CD4-positive, alpha-beta T cell (primary cell): ENCODE measurements at regions of chr2 and their contacts with region 1.

Region 1: DNA sequence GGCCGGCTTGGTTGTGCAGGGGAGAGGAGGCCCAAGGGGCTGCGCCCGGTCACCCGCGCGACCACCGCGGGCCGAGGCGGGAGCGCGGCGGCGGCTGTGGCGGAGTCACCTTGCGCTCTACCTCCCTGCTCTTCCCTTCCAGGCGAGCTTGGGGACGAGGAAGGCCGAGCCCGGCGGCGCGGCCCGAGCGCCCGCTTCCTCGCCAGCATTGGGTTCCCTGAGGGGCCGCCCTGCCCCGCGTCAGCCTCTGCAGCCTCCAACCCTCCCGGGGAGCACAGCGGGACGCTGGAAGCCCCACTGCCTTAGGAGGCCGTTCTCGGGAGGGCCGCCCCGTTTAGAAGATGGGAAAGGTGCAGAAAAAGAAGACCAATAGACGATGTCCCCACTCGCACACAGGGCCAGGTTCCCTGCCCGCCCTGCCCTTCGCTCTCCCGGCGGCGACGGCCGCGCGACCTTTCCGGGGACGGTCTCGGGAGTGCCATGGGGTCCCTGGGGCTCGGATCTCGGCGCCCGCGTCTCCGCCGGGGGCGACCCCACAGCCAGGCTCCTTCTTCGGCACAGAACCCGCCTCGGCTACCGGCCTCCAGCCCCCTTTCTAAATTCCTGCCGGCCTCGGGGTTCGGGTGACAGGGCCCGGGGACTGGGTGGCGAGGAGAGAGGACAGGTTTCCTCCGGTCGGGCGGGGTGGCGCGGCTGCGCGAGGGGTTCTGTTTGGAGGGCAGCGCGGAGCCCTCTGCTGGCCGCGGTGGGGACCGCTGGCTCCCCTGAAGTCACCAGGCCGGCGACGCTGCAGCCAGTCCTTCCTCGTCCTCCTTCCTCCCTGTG is 85.5 kb downstream of the HS6ST1 start:
- DNase-seq: peak; percentile 68 to 88 (median 80)
- ATAC-seq: peak; percentile 97
- H3K4me3 ChIP-seq: peak overlapping the region; percentile 57
- H3K4me3 Mint-ChIP-seq: peak overlapping the region; percentile 93
- H3K27ac ChIP-seq: no peak overlapping the region
- H3K27ac Mint-ChIP-seq: no peak overlapping the region
- H3K4me1 ChIP-seq: peaks cover 14% of the 10 kb centered on the region
- H3K4me1 Mint-ChIP-seq: no peaks in the 10 kb centered on the region
- H3K27me3 ChIP-seq: no peaks in the 10 kb centered on the region
- H3K27me3 Mint-ChIP-seq: no peaks in the 10 kb centered on the region
- CTCF ChIP-seq: peak; percentile 85

Region 2: DNA sequence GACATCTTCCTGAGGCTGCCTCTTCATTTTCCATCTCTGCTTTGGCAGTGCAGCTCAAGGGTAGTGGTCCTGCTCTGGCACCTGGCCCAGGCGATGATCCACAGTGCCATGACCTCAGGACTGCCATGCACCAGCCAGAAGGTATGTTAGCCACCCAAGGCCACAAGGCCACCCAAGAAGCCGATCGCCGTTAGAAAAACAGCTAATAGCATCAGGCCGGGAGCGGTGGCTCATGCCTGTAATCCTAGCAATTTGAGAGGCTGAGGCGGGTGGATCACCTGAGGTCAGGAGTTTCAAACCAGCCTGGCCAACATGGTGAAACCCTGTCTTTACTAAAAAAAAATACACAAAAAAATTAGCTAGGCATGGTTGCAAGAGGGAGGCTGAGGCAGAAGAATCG is 170.6 kb before region 1 on chr2:
- CTCF ChIA-PET with region 1: no interaction called
- POLR2A ChIA-PET with region 1: interaction called, 3 read pairs
- intact Hi-C with region 1: loop called in 1 of 2 experiments (anchors 2 kb)
- DNase-seq: no peak
- ATAC-seq: no peak
- H3K4me3 ChIP-seq: no peak overlapping the region
- H3K4me3 Mint-ChIP-seq: no peak overlapping the region
- H3K27ac ChIP-seq: no peak overlapping the region
- H3K27ac Mint-ChIP-seq: no peak overlapping the region
- H3K4me1 ChIP-seq: no peaks in the 10 kb centered on the region
- H3K4me1 Mint-ChIP-seq: no peaks in the 10 kb centered on the region
- H3K27me3 ChIP-seq: no peaks in the 10 kb centered on the region
- H3K27me3 Mint-ChIP-seq: no peaks in the 10 kb centered on the region
- CTCF ChIP-seq: no peak

Region 3: GRCh38 chr2:128162266-128162665 is 70.9 kb before region 1 on chr2:
- CTCF ChIA-PET with region 1: no interaction called
- POLR2A ChIA-PET with region 1: no interaction called
- intact Hi-C with region 1: no loop called
- DNase-seq: peak in 2 of 14 experiments; percentile 24 to 42
- ATAC-seq: no peak
- H3K4me3 ChIP-seq: no peak overlapping the region
- H3K4me3 Mint-ChIP-seq: no peak overlapping the region
- H3K27ac ChIP-seq: no peak overlapping the region
- H3K27ac Mint-ChIP-seq: no peak overlapping the region
- H3K4me1 ChIP-seq: no peaks in the 10 kb centered on the region
- H3K4me1 Mint-ChIP-seq: peaks cover under 1% of the 10 kb centered on the region
- H3K27me3 ChIP-seq: no peaks in the 10 kb centered on the region
- H3K27me3 Mint-ChIP-seq: no peaks in the 10 kb centered on the region
- CTCF ChIP-seq: no peak

Region 4: GRCh38 chr2:128178650-128179460 is 54.3 kb before region 1 on chr2:
- CTCF ChIA-PET with region 1: interaction called, 4 read pairs
- POLR2A ChIA-PET with region 1: no interaction called
- intact Hi-C with region 1: loop called (anchors 1 kb)
- DNase-seq: peak; percentile 7 to 75 (median 34)
- ATAC-seq: peak; percentile 86
- H3K4me3 ChIP-seq: no peak overlapping the region
- H3K4me3 Mint-ChIP-seq: no peak overlapping the region
- H3K27ac ChIP-seq: no peak overlapping the region
- H3K27ac Mint-ChIP-seq: no peak overlapping the region
- H3K4me1 ChIP-seq: no peaks in the 10 kb centered on the region
- H3K4me1 Mint-ChIP-seq: no peaks in the 10 kb centered on the region
- H3K27me3 ChIP-seq: no peaks in the 10 kb centered on the region
- H3K27me3 Mint-ChIP-seq: no peaks in the 10 kb centered on the region
- CTCF ChIP-seq: peak; percentile 64